Ascending aorta (tissue), 2 donors: ENCODE measurements at regions of chr1 and their contacts with region 1.

Region 1: DNA sequence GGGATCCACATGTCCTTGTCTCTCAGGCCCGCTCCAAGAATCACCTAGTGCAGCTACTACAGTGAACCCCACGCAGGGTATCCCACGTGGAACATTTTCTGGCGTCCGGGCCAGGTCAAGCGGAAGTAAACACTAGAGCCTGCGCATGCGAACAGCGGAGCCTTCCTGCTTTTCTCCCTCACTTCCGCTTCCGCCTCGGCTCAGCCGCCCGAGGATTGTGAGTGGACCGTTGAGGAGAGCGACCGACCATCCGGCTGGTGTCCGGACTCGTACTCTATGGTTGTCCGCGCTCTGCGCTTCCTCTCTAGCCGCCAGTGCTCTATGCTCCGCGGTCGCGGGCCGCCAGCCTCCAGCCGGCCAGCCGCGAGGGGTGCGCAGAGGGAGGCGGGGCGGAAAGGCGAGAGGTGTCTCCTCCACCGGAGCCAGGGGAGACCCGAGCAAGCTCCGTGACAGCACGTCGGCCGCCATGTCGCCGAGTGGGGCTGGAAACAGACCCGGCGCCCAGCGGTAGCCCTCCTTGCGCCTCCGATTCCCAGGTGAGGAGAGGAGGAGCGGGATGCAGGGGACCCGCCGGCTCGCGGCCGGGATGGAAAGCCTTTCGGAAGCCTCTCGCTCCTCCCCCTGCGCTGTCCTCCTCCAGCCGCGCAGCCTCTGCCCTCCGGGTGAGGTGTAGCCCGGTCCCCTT is at the starts of genes CNST and TFB2M:
- DNase-seq: peak; percentile 88 to 99
- H3K4me3 ChIP-seq: peak within 1 kb of the TSS; percentile 93 to 98
- H3K27ac ChIP-seq: peak within 1 kb of the TSS; percentile 90 to 98
- H3K4me1 ChIP-seq: peaks cover 11 to 29% of the 10 kb centered on the region in 2 donors
- H3K27me3 ChIP-seq: no peaks in the 10 kb centered on the region
- CTCF ChIP-seq: no peak
- total RNA-seq, gene CNST: 125 TPM
- total RNA-seq, gene TFB2M: 1.6 TPM

Region 2: GRCh38 chr1:246506674-246507481 is 59.4 kb before region 1 on chr1 and contains the start of gene SMYD3:
- intact Hi-C with region 1: loop called (anchors 5 kb)
- DNase-seq: peak in 1 of 2 donors; percentile 74
- H3K4me3 ChIP-seq: peak within 1 kb of the TSS; percentile 61 to 74
- H3K27ac ChIP-seq: no peak within 1 kb of the TSS
- H3K4me1 ChIP-seq: no peaks in the 10 kb centered on the region
- H3K27me3 ChIP-seq: no peaks in the 10 kb centered on the region
- CTCF ChIP-seq: no peak
- total RNA-seq, gene SMYD3: 0.32 TPM

Region 3: DNA sequence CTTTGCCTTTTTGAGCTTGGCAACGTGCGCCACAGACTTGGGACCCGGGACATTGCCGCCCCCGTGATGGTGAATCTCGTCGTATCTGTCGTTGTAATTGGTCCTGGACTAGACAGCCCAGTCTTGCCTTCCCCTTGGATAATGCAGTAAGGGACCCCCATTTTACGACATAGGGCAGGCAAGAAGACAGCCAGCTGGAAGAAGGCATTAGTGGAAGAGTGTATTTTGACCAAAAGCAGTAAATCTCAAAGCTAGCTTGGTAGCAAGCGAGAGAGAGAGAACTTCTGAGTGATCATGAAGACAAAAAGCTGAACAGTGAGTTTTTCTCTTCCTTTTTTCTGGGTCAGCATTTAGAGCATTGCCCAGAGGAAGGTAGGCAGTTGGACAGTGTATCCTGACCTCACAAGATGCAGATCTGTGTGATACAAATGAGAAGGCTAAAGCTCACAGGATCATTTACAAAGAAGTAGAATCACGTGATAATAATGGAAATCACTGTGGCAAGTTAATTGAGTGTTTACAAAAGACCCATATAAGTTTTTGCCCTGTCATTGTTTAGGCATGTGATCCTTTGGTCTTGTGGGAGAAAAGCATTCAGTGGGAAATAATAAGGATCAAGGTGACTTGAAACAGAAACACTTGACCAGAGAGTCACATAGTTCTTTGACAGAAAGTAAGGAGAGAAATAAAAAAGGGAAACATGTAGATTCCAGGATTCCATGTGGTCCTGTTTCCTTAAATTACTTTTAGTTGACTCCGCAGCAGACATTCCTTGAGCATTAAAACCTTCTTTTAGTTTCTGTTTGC is 66.2 kb after region 1 on chr1:
- intact Hi-C with region 1: loop called (anchors 5 kb)
- DNase-seq: no peak
- H3K4me3 ChIP-seq: no peak overlapping the region
- H3K27ac ChIP-seq: peak overlapping the region in 1 of 2 donors; percentile 26
- H3K4me1 ChIP-seq: no peaks in the 10 kb centered on the region
- H3K27me3 ChIP-seq: no peaks in the 10 kb centered on the region
- CTCF ChIP-seq: no peak

Region 4: DNA sequence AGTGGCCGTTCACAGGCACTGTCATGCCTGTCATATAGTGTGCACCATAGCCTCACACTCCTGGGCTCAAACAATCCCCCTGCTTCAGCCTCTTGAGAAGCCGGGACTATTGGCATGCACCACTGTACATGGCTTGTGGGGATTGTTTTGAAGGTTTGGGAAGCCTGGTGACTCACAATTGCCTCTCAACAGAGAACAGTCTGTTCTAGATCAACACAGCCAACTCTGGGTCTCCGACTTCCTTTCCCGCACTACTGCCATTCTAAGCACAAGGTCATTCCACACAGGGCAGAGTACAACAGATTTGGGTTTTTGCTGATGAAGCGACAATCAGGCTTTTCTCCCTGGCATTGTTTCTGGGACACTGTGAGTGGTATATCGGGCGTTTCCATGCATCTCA is 381.0 kb after region 1 on chr1:
- intact Hi-C with region 1: loop called (anchors 5 kb)
- DNase-seq: peak; percentile 67 to 94
- H3K4me3 ChIP-seq: peak overlapping the region in 1 of 2 donors; percentile 8
- H3K27ac ChIP-seq: peak overlapping the region; percentile 80 to 89
- H3K4me1 ChIP-seq: peaks cover 8 to 21% of the 10 kb centered on the region in 2 donors
- H3K27me3 ChIP-seq: no peaks in the 10 kb centered on the region
- CTCF ChIP-seq: no peak